Naive thymus-derived CD4-positive, alpha-beta T cell (primary cell): ENCODE measurements at regions of chr3 and their contacts with region 1.

Region 1: GRCh38 chr3:194573691-194574437 is 59.4 kb downstream of the TMEM44 start:
- DNase-seq: peak in 6 of 9 donors; percentile 18 to 38 (median 24)
- ATAC-seq: peak; percentile 87
- H3K4me3 ChIP-seq: no peak overlapping the region
- H3K4me3 Mint-ChIP-seq: no peak overlapping the region
- H3K27ac ChIP-seq: no peak overlapping the region
- H3K27ac Mint-ChIP-seq: no peak overlapping the region
- H3K4me1 ChIP-seq: no peaks in the 10 kb centered on the region
- H3K4me1 Mint-ChIP-seq: peaks cover 0 to 17% (median 0%) of the 10 kb centered on the region in 7 donors
- H3K27me3 ChIP-seq: no peaks in the 10 kb centered on the region
- H3K27me3 Mint-ChIP-seq: peaks cover 15 to 30% (median 24%) of the 10 kb centered on the region in 5 donors

Region 2: GRCh38 chr3:194381460-194381875 is 192.4 kb before region 1 on chr3:
- CTCF ChIA-PET with region 1: no interaction called
- POLR2A ChIA-PET with region 1: no interaction called
- intact Hi-C with region 1: no loop called
- DNase-seq: no peak
- ATAC-seq: no peak
- H3K4me3 ChIP-seq: no peak overlapping the region
- H3K4me3 Mint-ChIP-seq: no peak overlapping the region
- H3K27ac ChIP-seq: no peak overlapping the region
- H3K27ac Mint-ChIP-seq: no peak overlapping the region
- H3K4me1 ChIP-seq: no peaks in the 10 kb centered on the region
- H3K4me1 Mint-ChIP-seq: no peaks in the 10 kb centered on the region
- H3K27me3 ChIP-seq: no peaks in the 10 kb centered on the region
- H3K27me3 Mint-ChIP-seq: peaks cover 0 to 10% (median 0%) of the 10 kb centered on the region in 5 donors

Region 3: DNA sequence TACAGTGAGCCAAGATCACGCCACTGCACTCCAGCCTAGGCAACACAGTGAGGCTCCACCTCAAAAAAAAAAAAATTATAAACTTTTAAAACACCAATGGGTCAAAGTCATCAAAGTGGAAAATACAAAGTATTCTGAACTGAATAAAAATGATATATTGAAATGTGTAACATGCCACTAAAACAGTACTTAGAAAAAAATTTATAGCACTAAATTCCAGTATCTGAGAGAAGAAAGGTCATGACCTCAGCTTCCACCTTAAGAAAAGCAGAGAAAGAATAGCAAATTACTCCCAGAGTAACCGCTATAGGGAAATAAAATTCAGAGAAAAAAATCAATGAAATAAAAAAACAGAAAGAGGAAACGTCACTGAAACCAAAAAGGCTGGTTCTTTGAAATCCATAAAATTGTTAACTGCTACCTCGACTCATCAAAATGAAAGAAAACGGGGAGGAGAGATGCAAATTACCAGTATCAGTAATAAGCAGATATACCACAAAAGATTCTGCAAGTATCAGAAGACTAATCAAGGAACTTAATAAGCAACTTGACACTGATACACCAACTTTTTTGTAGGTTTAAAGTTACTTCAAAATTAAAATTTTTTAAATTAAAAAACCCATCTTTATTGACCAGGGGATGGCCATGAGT is 107.8 kb before region 1 on chr3:
- CTCF ChIA-PET with region 1: interaction called, 23 read pairs
- POLR2A ChIA-PET with region 1: interaction called, 3 read pairs
- intact Hi-C with region 1: loop called in 1 of 2 experiments (anchors 2 kb)
- DNase-seq: no peak
- ATAC-seq: no peak
- H3K4me3 ChIP-seq: no peak overlapping the region
- H3K4me3 Mint-ChIP-seq: no peak overlapping the region
- H3K27ac ChIP-seq: no peak overlapping the region
- H3K27ac Mint-ChIP-seq: no peak overlapping the region
- H3K4me1 ChIP-seq: peaks cover 0 to 4% of the 10 kb centered on the region in 2 donors
- H3K4me1 Mint-ChIP-seq: peaks cover 5 to 28% (median 22%) of the 10 kb centered on the region in 7 donors
- H3K27me3 ChIP-seq: no peaks in the 10 kb centered on the region
- H3K27me3 Mint-ChIP-seq: no peaks in the 10 kb centered on the region